ENCODE measurements at regions of chr12 and their contacts with region 1.

Region 1: GRCh38 chr12:4849795-4850345 is 59.8 kb upstream of the KCNA1 start:
- DNase-seq: no peak
- ATAC-seq: no peak
- H3K4me3 ChIP-seq: no peak overlapping the region
- H3K27ac ChIP-seq: no peak overlapping the region
- H3K4me1 ChIP-seq: no peaks in the 10 kb centered on the region
- H3K27me3 ChIP-seq: no peaks in the 10 kb centered on the region
- CTCF ChIP-seq: no peak

Region 2: DNA sequence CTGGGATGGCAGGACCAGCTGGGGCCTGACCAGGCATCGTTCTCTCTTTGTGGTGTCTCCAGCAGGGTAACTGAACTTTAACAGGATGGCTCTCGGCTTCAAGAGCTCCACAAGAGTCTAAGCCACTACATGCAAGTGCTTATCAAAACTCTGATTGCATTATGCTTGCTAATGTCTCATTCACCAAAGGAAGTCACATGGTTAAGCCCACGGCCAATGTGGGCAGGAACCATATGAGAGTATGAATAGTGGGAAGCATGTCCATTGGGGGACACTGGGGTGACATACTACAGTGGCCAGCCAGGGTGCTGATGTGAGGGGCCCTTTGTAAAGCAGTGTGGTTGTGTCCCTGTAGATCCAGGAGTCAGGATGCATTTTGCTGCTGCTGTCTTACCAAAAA is 158.8 kb after region 1 on chr12:
- intact Hi-C with region 1: loop called (anchors 5 kb)
- DNase-seq: no peak
- ATAC-seq: peak; percentile 22
- H3K4me3 ChIP-seq: no peak overlapping the region
- H3K27ac ChIP-seq: no peak overlapping the region
- H3K4me1 ChIP-seq: no peaks in the 10 kb centered on the region
- H3K27me3 ChIP-seq: peaks cover 14% of the 10 kb centered on the region
- CTCF ChIP-seq: no peak